ENCODE measurements at regions of chr1 and their contacts with region 1.

Region 1: GRCh38 chr1:101309334-101310311 is 72.8 kb downstream of the S1PR1 start:
- DNase-seq: peak; percentile 69 to 78
- ATAC-seq: peak; percentile 84
- H3K4me3 ChIP-seq: peak overlapping the region; percentile 8 to 29
- H3K27ac ChIP-seq: no peak overlapping the region
- H3K4me1 ChIP-seq: no peaks in the 10 kb centered on the region
- H3K27me3 ChIP-seq: no peaks in the 10 kb centered on the region

Region 2: GRCh38 chr1:101071470-101071891 is 238.1 kb before region 1 on chr1:
- intact Hi-C with region 1: no loop called
- DNase-seq: no peak
- ATAC-seq: no peak
- H3K4me3 ChIP-seq: no peak overlapping the region
- H3K27ac ChIP-seq: no peak overlapping the region
- H3K4me1 ChIP-seq: no peaks in the 10 kb centered on the region
- H3K27me3 ChIP-seq: no peaks in the 10 kb centered on the region

Region 3: GRCh38 chr1:101161619-101162018 is 148.0 kb before region 1 on chr1:
- intact Hi-C with region 1: no loop called
- DNase-seq: no peak
- ATAC-seq: no peak
- H3K4me3 ChIP-seq: no peak overlapping the region
- H3K27ac ChIP-seq: no peak overlapping the region
- H3K4me1 ChIP-seq: no peaks in the 10 kb centered on the region
- H3K27me3 ChIP-seq: no peaks in the 10 kb centered on the region

Region 4: GRCh38 chr1:101357444-101357986 is 47.9 kb after region 1 on chr1:
- intact Hi-C with region 1: loop called (anchors 2 to 5 kb)
- DNase-seq: no peak
- ATAC-seq: peak; percentile 91
- H3K4me3 ChIP-seq: no peak overlapping the region
- H3K27ac ChIP-seq: no peak overlapping the region
- H3K4me1 ChIP-seq: no peaks in the 10 kb centered on the region
- H3K27me3 ChIP-seq: no peaks in the 10 kb centered on the region